ENCODE measurements at regions of chr12 and their contacts with region 1.

Region 1: GRCh38 chr12:79690638-79691493 is at the start of gene PAWR:
- H3K4me3 ChIP-seq: peak within 1 kb of the TSS; percentile 97
- H3K27ac ChIP-seq: peak within 1 kb of the TSS; percentile 100
- H3K4me1 ChIP-seq: peaks cover 22% of the 10 kb centered on the region
- CTCF ChIP-seq: peak; percentile 63

Region 2: GRCh38 chr12:79535751-79536150 is 155.1 kb before region 1 on chr12:
- CTCF ChIA-PET with region 1: no interaction called
- POLR2A ChIA-PET with region 1: no interaction called
- H3K4me3 ChIP-seq: no peak overlapping the region
- H3K27ac ChIP-seq: no peak overlapping the region
- H3K4me1 ChIP-seq: peaks cover 3% of the 10 kb centered on the region; the same call in 1 of the 2 replicates
- CTCF ChIP-seq: no peak

Region 3: GRCh38 chr12:79547735-79548609 is 142.9 kb before region 1 on chr12:
- CTCF ChIA-PET with region 1: interaction called, 13 read pairs
- POLR2A ChIA-PET with region 1: interaction called, 13 read pairs
- H3K4me3 ChIP-seq: no peak overlapping the region
- H3K27ac ChIP-seq: no peak overlapping the region; the same call in 1 of the 2 replicates
- H3K4me1 ChIP-seq: no peaks in the 10 kb centered on the region
- CTCF ChIP-seq: peak; percentile 56

Region 4: DNA sequence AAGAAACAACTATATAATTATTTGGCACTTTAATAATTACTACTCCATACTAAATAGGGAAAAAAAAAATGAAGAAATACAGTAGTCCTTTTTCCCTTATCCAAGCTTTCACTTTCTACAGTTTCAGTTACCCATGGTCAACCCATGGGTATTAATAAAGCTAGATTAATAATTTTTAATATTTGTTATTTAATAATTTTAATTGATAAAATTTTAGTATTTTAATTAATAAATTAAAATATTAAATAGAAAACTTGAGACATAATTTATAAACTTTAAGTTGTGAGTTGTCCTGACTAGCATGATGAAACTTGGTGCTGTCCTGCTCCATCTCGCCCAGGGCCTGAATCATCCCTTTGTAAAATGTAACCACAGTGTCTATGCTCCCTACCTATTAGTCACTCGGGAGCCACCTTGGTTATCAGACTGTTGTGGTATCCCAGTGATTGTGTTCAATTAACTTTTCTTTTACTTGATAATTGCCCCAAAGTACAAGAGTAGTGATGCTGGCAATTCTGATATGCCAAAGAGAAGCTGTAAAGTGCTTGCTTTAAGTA is 71.9 kb before region 1 on chr12:
- CTCF ChIA-PET with region 1: no interaction called
- POLR2A ChIA-PET with region 1: interaction called, 11 read pairs
- H3K4me3 ChIP-seq: no peak overlapping the region
- H3K27ac ChIP-seq: no peak overlapping the region
- H3K4me1 ChIP-seq: peaks cover 11% of the 10 kb centered on the region
- CTCF ChIP-seq: no peak